Activated CD4-positive, alpha-beta T cell treated with anti-CD3 and anti-CD28 coated beads, Interleukin-2, amount 10 ng/mL, durations not matched to agents 24 days and 14 days (primary cell): ENCODE measurements at regions of chr9 and their contacts with region 1.

Region 1: GRCh38 chr9:74570879-74571512 is 73.9 kb downstream of the RORB start:
- DNase-seq: peak; percentile 71
- H3K4me3 Mint-ChIP-seq: no peak overlapping the region
- H3K27ac Mint-ChIP-seq: no peak overlapping the region
- H3K4me1 Mint-ChIP-seq: no peaks in the 10 kb centered on the region
- H3K27me3 Mint-ChIP-seq: no peaks in the 10 kb centered on the region

Region 2: GRCh38 chr9:73200694-73201452 is 1370.1 kb before region 1 on chr9:
- intact Hi-C with region 1: loop called (anchors 2 kb)
- DNase-seq: no peak
- H3K4me3 Mint-ChIP-seq: no peak overlapping the region
- H3K27ac Mint-ChIP-seq: no peak overlapping the region
- H3K4me1 Mint-ChIP-seq: no peaks in the 10 kb centered on the region
- H3K27me3 Mint-ChIP-seq: peaks cover 19% of the 10 kb centered on the region

Region 3: DNA sequence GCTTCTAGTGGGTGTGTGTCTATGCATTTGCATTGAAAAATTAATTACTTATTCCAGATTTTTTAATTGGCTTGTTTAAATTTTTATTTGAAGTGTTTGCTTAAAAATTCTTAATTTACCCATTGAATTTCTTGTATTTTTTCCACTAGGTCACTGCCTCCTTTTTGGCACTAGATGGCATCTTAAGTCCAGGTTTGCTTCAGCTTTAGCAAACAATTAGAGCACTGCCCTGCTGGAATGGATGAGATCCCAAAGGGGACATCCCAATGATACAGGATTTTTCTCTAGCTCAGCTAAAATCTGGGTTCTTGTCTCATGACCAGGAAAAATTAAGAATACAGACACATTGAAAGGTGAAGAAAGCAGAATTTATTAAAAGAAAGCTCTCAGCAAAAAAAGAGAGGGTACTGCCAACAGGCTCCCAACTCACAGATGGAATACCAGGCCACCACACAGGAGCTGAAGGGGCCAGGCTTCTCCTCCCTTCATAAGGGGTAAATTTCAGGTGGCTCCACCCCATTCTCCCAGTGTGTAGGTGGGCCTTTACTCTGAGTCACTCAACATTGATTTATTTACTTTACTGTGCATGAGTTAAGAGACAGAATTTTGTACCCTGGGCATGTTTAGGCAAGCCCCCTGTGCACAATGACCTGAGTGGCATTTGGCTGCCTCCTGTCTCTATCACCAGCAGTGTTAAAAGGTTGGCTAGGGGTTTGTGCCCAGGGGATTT is 887.0 kb before region 1 on chr9:
- intact Hi-C with region 1: loop called (anchors 5 kb)
- DNase-seq: no peak
- H3K4me3 Mint-ChIP-seq: no peak overlapping the region
- H3K27ac Mint-ChIP-seq: no peak overlapping the region
- H3K4me1 Mint-ChIP-seq: no peaks in the 10 kb centered on the region
- H3K27me3 Mint-ChIP-seq: no peaks in the 10 kb centered on the region

Region 4: GRCh38 chr9:74379718-74380117 is 191.3 kb before region 1 on chr9:
- intact Hi-C with region 1: loop called (anchors 5 kb)
- DNase-seq: peak; percentile 76
- H3K4me3 Mint-ChIP-seq: no peak overlapping the region
- H3K27ac Mint-ChIP-seq: no peak overlapping the region
- H3K4me1 Mint-ChIP-seq: peaks cover 2% of the 10 kb centered on the region
- H3K27me3 Mint-ChIP-seq: no peaks in the 10 kb centered on the region

Region 5: GRCh38 chr9:74511333-74511732 is 59.7 kb before region 1 on chr9:
- intact Hi-C with region 1: no loop called
- DNase-seq: no peak
- H3K4me3 Mint-ChIP-seq: no peak overlapping the region
- H3K27ac Mint-ChIP-seq: no peak overlapping the region
- H3K4me1 Mint-ChIP-seq: no peaks in the 10 kb centered on the region
- H3K27me3 Mint-ChIP-seq: peaks cover 4% of the 10 kb centered on the region

Region 6: GRCh38 chr9:74742792-74743730 is 172.1 kb after region 1 on chr9:
- intact Hi-C with region 1: loop called (anchors 10 kb)
- DNase-seq: peak; percentile 59
- H3K4me3 Mint-ChIP-seq: no peak overlapping the region
- H3K27ac Mint-ChIP-seq: no peak overlapping the region
- H3K4me1 Mint-ChIP-seq: no peaks in the 10 kb centered on the region
- H3K27me3 Mint-ChIP-seq: peaks cover 25% of the 10 kb centered on the region